ENCODE measurements at regions of chr17 and their contacts with region 1.

Region 1: GRCh38 chr17:58200017-58200633 is 7.6 kb downstream of the EPX start:
- DNase-seq: peak in 4 of 5 donors; percentile 26 to 44 (median 39)
- H3K4me3 ChIP-seq: no peak overlapping the region
- H3K4me3 Mint-ChIP-seq: no peak overlapping the region
- H3K27ac ChIP-seq: no peak overlapping the region
- H3K27ac Mint-ChIP-seq: peak overlapping the region in 1 of 7 donors; percentile 63
- H3K4me1 ChIP-seq: no peaks in the 10 kb centered on the region
- H3K4me1 Mint-ChIP-seq: peaks cover 0 to 5% (median 1%) of the 10 kb centered on the region in 4 donors
- H3K27me3 ChIP-seq: no peaks in the 10 kb centered on the region
- H3K27me3 Mint-ChIP-seq: peaks cover 11 to 12% of the 10 kb centered on the region in 2 donors

Region 2: DNA sequence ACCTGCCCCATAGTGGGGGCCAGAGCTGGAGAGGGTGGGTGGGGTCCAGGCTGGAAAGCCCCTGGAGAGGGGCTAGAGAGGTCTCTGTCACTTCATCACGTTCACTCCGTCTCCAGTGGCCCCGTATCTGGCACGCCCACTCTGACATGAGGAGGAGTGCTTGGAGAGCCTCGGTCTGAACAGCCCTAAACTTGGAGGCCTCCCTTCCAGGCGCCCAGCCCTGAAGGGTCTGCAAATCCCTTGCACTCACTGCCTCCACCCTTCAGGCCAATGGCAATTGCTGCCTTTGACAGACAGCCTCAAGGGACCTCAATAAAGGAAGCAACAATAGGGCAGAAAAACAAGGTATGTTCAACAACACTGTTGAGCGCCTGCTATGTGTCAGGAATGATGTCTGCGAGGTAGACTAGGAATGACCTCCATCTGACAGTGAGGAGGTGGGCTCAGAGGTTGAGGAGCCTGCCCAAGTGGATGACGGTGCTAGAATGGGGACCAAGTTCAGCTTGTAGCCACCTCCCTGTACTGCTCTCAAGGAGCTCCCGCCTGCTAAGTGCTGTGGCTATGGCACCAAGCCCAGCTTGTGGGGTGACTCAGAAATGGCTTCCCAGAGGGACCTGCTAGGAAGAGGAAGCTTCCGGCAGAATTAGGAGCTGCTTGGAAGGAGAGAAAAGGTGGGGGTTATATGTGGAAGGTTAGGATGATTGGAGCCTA is 10.5 kb before region 1 on chr17:
- CTCF ChIA-PET with region 1: interaction called, 17 read pairs
- POLR2A ChIA-PET with region 1: no interaction called
- intact Hi-C with region 1: no loop called
- DNase-seq: no peak
- H3K4me3 ChIP-seq: no peak overlapping the region
- H3K4me3 Mint-ChIP-seq: no peak overlapping the region
- H3K27ac ChIP-seq: no peak overlapping the region
- H3K27ac Mint-ChIP-seq: no peak overlapping the region
- H3K4me1 ChIP-seq: peaks cover 3% of the 10 kb centered on the region
- H3K4me1 Mint-ChIP-seq: peaks cover 2 to 6% (median 4%) of the 10 kb centered on the region in 4 donors
- H3K27me3 ChIP-seq: peaks cover 4% of the 10 kb centered on the region
- H3K27me3 Mint-ChIP-seq: peaks cover 2 to 12% of the 10 kb centered on the region in 2 donors

Region 3: DNA sequence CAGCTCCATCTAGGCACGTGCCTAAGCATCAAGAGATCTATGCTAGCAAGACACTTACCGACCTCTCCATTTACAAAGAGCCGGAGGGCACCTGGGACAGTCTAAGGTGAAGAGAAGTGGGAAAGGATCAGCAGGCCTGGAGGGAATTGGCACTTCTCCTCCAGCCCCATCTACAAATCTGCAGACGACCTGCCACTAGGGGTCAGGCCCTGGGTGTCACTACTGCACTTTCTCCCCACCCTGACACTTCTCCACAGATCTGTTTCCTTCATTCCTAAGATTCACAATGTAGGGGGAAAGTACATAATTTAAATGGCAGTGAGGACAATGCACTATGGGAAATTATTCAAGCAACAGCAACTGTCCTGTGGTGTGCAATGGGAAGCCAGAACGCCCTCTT is 10.8 kb after region 1 on chr17:
- CTCF ChIA-PET with region 1: interaction called, 17 read pairs
- POLR2A ChIA-PET with region 1: no interaction called
- intact Hi-C with region 1: no loop called
- DNase-seq: no peak
- H3K4me3 ChIP-seq: no peak overlapping the region
- H3K4me3 Mint-ChIP-seq: no peak overlapping the region
- H3K27ac ChIP-seq: no peak overlapping the region
- H3K27ac Mint-ChIP-seq: no peak overlapping the region
- H3K4me1 ChIP-seq: no peaks in the 10 kb centered on the region
- H3K4me1 Mint-ChIP-seq: no peaks in the 10 kb centered on the region
- H3K27me3 ChIP-seq: no peaks in the 10 kb centered on the region
- H3K27me3 Mint-ChIP-seq: no peaks in the 10 kb centered on the region